ENCODE measurements at regions of chr1 and their contacts with region 1.

Region 1: GRCh38 chr1:183039985-183040447 is 16.8 kb downstream of the LAMC1 start:
- DNase-seq: no peak
- ATAC-seq: no peak

Region 2: DNA sequence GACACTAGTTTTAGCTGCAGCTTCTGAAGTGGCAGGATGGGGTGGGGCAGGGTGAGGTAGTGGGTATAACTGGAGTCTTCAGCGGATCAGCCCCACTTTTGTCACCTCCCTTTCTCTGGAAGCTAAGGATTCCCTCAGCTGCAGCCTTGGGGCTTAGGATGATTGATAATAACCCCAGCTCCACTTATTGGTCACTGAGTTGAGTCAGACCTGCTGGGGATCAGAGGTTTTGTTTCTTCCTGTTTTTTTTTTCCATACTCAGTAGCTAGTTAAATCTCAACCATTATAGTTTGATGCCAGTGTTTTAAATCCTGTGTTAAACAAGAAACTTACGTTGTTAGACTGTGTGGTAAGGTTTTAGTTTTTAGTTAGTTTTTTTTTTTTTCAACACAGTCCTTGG is 40.4 kb after region 1 on chr1:
- intact Hi-C with region 1: loop called in 1 of 2 experiments (anchors 10 kb)
- DNase-seq: no peak
- ATAC-seq: no peak

Measured in left colon (tissue), 2 donors.